Posterior vena cava (tissue), 2 donors: ENCODE measurements at regions of chr3 and their contacts with region 1.

Region 1: GRCh38 chr3:79140708-79141107 is 627.1 kb downstream of the ROBO1 start:
- DNase-seq: no peak

Region 2: GRCh38 chr3:79094654-79095053 is 46.1 kb before region 1 on chr3:
- intact Hi-C with region 1: no loop called
- DNase-seq: no peak

Region 3: GRCh38 chr3:79115454-79115853 is 25.3 kb before region 1 on chr3:
- intact Hi-C with region 1: loop called in 1 of 2 experiments (anchors 1 kb)
- DNase-seq: no peak